ENCODE measurements at regions of chr3 and their contacts with region 1.

Region 1: DNA sequence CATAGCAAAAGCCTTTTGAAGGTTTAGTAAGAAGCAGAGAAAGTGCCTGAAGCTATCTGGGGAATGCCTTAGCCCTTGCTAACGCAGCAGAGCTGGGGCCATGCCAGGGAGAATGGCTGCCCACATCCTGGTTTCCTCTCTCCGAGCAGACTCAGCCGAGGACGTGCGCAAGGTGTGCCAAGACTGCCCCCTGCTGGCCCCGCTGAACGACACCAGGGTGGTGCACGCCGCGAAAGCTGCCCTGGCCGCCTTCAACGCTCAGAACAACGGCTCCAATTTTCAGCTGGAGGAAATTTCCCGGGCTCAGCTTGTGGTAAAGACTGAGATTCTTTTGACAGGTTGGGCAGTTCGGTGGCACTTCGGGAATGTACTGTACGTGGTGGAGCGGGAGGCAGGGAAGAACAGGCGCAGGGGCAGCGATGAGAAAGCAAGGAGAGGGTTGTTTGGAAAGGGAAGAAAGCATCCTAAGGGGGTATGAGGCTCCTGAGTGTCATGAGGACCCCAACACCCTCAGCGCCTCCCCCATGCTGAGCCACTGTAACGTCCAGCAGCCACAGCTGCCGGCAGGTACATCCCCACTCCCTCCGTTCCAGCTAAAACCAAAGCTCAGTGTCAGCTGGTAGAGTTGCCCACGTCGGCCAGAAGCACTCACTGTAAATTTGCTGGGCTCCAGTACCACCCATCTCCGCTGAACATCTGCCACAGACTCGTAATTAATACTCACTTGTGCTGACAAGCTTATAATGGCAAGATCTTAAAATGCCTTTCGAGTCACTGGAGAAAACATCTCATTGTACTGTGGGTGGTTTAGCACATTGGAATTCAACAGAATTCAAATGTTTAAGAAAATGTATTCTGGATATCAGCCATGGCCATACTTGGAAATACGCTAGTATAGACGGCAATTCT is 4.4 kb downstream of the AHSG start:
- DNase-seq: peak; percentile 99
- ATAC-seq: peak; percentile 98
- H3K4me3 ChIP-seq: peak overlapping the region; percentile 54
- H3K27ac ChIP-seq: 0 out of 2 replicates have a peak overlapping the region, but pooled peaks have one; percentile 35
- H3K4me1 ChIP-seq: peaks cover 16% of the 10 kb centered on the region
- H3K27me3 ChIP-seq: no peaks in the 10 kb centered on the region
- CTCF ChIP-seq: peak; percentile 96

Region 2: DNA sequence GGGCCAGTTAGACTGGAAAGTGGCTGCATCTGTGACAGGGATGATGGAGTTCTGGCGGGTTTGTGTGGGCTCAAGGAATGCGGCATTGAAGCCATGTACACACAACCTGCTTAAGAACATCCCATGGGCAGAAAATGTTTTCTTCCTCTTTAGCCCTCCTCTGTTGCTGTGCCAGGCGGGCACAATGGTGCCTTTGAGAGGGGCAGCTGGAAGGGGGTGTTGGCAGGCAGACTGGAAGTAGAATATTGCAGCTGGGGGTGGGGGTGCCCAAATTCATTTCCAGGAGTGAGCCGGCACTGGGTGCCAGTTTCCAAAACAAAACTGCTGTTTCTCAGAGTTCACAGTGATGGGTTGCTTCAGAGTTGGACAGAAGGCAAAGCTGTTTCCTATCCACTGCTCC is 416.6 kb before region 1 on chr3:
- CTCF ChIA-PET with region 1: no interaction called
- POLR2A ChIA-PET with region 1: no interaction called
- intact Hi-C with region 1: no loop called
- DNase-seq: no peak
- ATAC-seq: no peak
- H3K4me3 ChIP-seq: no peak overlapping the region
- H3K27ac ChIP-seq: no peak overlapping the region
- H3K4me1 ChIP-seq: no peaks in the 10 kb centered on the region
- H3K27me3 ChIP-seq: peaks cover 62% of the 10 kb centered on the region
- CTCF ChIP-seq: no peak

Region 3: GRCh38 chr3:186534113-186534669 is 83.1 kb before region 1 on chr3:
- CTCF ChIA-PET with region 1: no interaction called
- POLR2A ChIA-PET with region 1: no interaction called
- intact Hi-C with region 1: loop called (anchors 2 kb)
- DNase-seq: no peak
- ATAC-seq: no peak
- H3K4me3 ChIP-seq: no peak overlapping the region
- H3K27ac ChIP-seq: no peak overlapping the region
- H3K4me1 ChIP-seq: no peaks in the 10 kb centered on the region
- H3K27me3 ChIP-seq: no peaks in the 10 kb centered on the region
- CTCF ChIP-seq: no peak

Region 4: DNA sequence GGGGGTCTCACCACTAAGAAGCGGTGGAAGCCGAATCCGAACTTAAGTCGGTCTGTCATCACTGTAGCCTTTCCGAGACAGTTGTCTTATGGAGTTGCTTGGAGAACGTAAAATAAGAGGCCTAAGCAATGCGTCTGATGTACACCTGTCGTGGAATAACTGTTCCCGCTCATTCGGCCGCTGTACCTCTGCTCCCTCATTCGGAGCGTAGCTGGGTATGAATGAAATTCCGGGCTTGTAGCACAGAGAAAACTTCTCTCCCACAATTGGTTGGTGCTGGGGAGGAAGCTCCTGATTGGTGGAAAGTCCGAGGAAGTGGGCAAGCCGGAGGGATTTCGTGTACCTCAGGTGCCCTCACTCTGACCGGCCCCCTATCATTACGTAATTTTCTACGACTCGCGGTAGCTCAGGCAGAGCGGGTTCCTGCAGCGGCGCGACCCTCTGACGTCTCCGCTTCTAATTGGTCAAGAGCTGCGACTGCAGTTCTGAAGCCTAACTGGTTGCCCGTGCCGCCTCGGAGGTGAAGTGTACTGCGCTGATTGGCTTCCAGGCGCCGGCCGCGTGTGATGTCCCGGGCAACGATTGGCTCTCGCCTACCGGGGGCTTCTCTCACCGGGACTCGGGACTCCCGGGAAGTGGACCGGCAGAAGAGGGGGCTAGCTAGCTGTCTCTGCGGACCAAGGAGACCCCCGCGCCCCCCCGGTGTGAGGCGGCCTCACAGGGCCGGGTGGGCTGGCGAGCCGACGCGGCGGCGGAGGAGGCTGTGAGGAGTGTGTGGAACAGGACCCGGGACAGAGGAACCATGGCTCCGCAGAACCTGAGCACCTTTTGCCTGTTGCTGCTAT is 47.0 kb before region 1 on chr3 and contains the start of gene DNAJB11:
- CTCF ChIA-PET with region 1: interaction called, 7 read pairs
- POLR2A ChIA-PET with region 1: interaction called, 7 read pairs
- intact Hi-C with region 1: loop called (anchors 1 kb)
- DNase-seq: peak; percentile 99
- ATAC-seq: peak; percentile 82
- H3K4me3 ChIP-seq: peak within 1 kb of the TSS; percentile 92
- H3K27ac ChIP-seq: peak within 1 kb of the TSS; percentile 48
- H3K4me1 ChIP-seq: peaks cover 16% of the 10 kb centered on the region
- H3K27me3 ChIP-seq: no peaks in the 10 kb centered on the region
- CTCF ChIP-seq: no peak
- total RNA-seq, gene DNAJB11: 117 and 120 TPM in 2 replicates

Region 5: DNA sequence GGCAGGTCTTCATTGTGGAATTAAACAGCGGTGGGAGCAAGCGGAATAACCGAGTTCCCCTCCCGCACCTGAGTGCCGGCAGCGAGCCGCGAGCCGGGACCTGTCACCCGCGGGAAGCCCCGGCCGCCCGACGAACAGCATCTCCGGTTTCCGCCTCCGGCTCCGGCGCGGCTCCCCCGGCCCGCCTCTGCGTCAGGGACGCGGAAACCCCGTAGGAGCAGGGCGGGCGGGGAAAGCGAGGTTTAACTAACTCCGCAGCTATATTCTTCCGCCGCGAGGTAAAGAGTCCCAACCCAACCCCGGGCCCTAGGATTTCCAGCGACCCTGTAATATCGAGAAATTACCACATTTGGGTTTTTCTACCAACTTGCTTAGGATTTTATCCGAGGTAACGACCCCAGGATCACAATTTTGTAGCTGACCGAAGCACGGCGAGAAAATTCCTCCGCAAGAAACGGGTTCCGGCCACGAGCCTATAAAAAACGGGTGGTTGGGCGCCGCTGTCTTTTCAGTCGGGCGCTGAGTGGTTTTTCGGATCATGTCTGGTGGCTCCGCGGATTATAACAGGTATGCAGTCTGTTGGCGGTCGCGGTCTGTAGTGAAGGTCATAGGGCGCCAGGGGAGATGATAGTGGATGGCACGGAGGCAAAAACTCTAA is 165.9 kb after region 1 on chr3 and contains the start of gene EIF4A2:
- CTCF ChIA-PET with region 1: interaction called, 4 read pairs
- POLR2A ChIA-PET with region 1: interaction called, 4 read pairs
- intact Hi-C with region 1: loop called (anchors 1 kb)
- DNase-seq: peak; percentile 91
- ATAC-seq: peak; percentile 71
- H3K4me3 ChIP-seq: peak within 1 kb of the TSS; percentile 100
- H3K27ac ChIP-seq: peak within 1 kb of the TSS; percentile 73
- H3K4me1 ChIP-seq: peaks cover 31% of the 10 kb centered on the region
- H3K27me3 ChIP-seq: no peaks in the 10 kb centered on the region
- CTCF ChIP-seq: no peak
- total RNA-seq, gene EIF4A2: 204 and 233 TPM in 2 replicates

Region 6: GRCh38 chr3:186798239-186798874 is 181.1 kb after region 1 on chr3:
- CTCF ChIA-PET with region 1: no interaction called
- POLR2A ChIA-PET with region 1: no interaction called
- intact Hi-C with region 1: no loop called
- DNase-seq: no peak
- ATAC-seq: no peak
- H3K4me3 ChIP-seq: no peak overlapping the region
- H3K27ac ChIP-seq: no peak overlapping the region
- H3K4me1 ChIP-seq: no peaks in the 10 kb centered on the region
- H3K27me3 ChIP-seq: no peaks in the 10 kb centered on the region
- CTCF ChIP-seq: no peak